OCI-LY7 (cell line): ENCODE measurements at regions of chr5 and their contacts with region 1.

Region 1: DNA sequence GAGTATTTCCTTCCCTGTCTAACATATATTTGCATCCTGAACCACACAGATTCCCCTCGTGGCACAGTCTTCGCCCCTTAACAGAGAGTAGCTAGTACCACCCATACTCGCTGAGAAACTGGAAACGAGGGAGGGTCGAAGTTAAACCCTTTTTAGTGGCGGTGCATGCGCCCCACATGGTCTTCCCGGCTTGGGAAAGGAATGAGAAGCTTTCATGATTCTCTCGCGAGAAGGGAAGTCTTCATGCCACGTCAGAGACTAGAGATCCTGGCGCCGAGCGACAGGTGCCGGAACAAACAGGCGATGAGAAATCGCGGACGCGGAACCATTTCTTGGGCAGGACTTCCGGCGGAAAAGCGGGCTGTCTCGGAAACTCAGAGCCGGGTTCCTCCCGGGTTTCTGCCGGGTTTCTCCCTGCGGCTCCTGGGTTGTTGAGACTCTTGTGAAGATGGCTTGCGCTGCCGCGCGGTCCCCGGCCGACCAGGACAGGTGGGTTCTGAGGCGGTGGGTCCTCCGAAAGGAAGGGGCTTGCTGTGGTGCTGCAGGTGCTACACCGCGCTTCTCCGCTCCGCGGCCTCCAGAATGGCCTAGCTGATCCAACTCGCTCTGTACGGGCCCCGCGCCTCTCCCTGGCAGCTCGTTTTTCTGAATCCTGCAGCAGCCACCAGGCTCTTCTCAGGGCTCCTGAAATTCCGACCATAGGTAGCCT is at the start of gene SRP19:
- DNase-seq: peak; percentile 97
- H3K4me3 ChIP-seq: peak within 1 kb of the TSS; percentile 76
- H3K27ac ChIP-seq: peak within 1 kb of the TSS; percentile 36
- H3K4me1 ChIP-seq: peaks cover 30% of the 10 kb centered on the region
- CTCF ChIP-seq: no peak
- total RNA-seq, gene SRP19: 32.9 and 48.1 TPM in 2 replicates

Region 2: GRCh38 chr5:112848116-112848811 is 12.8 kb before region 1 on chr5:
- CTCF ChIA-PET with region 1: no interaction called
- POLR2A ChIA-PET with region 1: interaction called, 13 read pairs
- intact Hi-C with region 1: no loop called
- DNase-seq: peak; percentile 79
- H3K4me3 ChIP-seq: no peak overlapping the region
- H3K27ac ChIP-seq: no peak overlapping the region
- H3K4me1 ChIP-seq: no peaks in the 10 kb centered on the region
- CTCF ChIP-seq: peak; percentile 83

Region 3: GRCh38 chr5:112907166-112907631 is 46.1 kb after region 1 on chr5:
- CTCF ChIA-PET with region 1: no interaction called
- POLR2A ChIA-PET with region 1: interaction called, 7 read pairs
- intact Hi-C with region 1: loop called (anchors 5 kb)
- DNase-seq: no peak
- H3K4me3 ChIP-seq: no peak overlapping the region
- H3K27ac ChIP-seq: no peak overlapping the region
- H3K4me1 ChIP-seq: no peaks in the 10 kb centered on the region
- CTCF ChIP-seq: no peak

Region 4: DNA sequence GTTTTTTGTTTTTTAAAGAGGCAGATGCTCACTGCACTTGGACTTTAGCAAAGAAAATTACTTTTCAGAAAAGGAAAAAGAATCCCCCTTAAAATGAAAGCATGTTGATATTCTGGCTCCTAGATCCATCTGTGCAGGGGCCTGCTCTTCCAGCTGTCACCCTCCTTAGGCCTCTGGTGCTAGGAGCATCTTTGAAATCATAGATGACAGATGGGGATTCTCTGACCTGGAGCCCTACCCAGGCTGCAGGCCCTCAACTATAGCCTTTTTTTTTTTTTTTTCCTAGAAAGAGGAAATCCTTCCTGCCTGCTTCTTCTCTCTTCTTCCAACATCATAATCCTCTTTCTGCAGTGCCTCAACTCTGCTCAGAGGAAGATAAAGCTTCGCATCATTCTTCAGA is 99.2 kb after region 1 on chr5:
- CTCF ChIA-PET with region 1: no interaction called
- POLR2A ChIA-PET with region 1: no interaction called
- intact Hi-C with region 1: loop called (anchors 5 kb)
- DNase-seq: no peak
- H3K4me3 ChIP-seq: no peak overlapping the region
- H3K27ac ChIP-seq: no peak overlapping the region
- H3K4me1 ChIP-seq: peaks cover 14% of the 10 kb centered on the region
- CTCF ChIP-seq: no peak

Region 5: DNA sequence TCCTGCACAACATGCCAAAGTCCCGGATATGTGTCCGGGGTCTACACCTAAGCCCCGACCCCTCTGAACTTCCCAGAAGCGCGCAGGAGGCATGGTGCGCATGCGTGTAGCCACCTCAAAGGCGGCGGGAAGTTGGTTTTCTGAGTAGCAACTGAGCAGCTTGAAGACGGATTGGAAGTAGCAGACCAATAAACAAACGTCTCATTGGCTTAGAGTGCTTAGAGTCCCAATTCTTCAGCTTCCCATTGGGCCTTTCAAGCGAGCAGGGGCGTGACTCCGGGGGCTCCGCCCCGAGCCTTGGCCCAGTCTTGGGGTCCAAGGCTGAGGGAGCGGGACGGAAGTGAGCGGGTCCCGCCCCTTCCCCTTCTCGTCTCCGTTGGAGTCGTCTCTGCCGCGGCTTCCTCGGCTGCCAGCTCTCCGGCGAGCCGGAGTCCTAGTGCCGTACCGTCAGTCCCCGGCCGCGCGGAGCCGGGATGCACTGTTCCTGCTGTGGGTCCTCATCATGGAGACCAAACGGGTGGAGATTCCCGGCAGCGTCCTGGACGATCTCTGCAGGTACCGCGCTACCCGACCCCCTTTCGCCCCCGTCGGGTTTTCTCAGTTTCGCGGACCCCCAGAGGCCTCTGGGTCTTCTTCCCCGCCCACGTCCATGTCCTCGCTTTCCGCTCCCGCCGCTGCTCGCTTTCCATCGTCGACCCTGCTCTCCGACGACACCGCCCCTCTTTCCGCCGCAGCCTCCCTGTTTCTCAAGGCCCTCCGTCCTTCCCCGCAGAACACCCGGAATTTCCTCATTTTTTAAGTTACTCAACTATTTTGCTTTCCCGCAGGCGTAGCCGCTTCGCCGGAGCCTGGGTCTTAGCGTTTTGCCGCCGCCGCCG is 115.6 kb after region 1 on chr5 and contains the start of gene DCP2:
- CTCF ChIA-PET with region 1: interaction called, 3 read pairs
- POLR2A ChIA-PET with region 1: interaction called, 9 read pairs
- intact Hi-C with region 1: loop called (anchors 2 kb)
- DNase-seq: peak; percentile 100
- H3K4me3 ChIP-seq: peak within 1 kb of the TSS; percentile 92
- H3K27ac ChIP-seq: peak within 1 kb of the TSS; percentile 73
- H3K4me1 ChIP-seq: peaks cover 36% of the 10 kb centered on the region
- CTCF ChIP-seq: no peak
- total RNA-seq, gene DCP2: 69.3 and 81.3 TPM in 2 replicates

Region 6: GRCh38 chr5:113005454-113005853 is 144.4 kb after region 1 on chr5:
- CTCF ChIA-PET with region 1: no interaction called
- POLR2A ChIA-PET with region 1: no interaction called
- intact Hi-C with region 1: no loop called
- DNase-seq: no peak
- H3K4me3 ChIP-seq: no peak overlapping the region
- H3K27ac ChIP-seq: no peak overlapping the region
- H3K4me1 ChIP-seq: no peaks in the 10 kb centered on the region
- CTCF ChIP-seq: no peak

Region 7: DNA sequence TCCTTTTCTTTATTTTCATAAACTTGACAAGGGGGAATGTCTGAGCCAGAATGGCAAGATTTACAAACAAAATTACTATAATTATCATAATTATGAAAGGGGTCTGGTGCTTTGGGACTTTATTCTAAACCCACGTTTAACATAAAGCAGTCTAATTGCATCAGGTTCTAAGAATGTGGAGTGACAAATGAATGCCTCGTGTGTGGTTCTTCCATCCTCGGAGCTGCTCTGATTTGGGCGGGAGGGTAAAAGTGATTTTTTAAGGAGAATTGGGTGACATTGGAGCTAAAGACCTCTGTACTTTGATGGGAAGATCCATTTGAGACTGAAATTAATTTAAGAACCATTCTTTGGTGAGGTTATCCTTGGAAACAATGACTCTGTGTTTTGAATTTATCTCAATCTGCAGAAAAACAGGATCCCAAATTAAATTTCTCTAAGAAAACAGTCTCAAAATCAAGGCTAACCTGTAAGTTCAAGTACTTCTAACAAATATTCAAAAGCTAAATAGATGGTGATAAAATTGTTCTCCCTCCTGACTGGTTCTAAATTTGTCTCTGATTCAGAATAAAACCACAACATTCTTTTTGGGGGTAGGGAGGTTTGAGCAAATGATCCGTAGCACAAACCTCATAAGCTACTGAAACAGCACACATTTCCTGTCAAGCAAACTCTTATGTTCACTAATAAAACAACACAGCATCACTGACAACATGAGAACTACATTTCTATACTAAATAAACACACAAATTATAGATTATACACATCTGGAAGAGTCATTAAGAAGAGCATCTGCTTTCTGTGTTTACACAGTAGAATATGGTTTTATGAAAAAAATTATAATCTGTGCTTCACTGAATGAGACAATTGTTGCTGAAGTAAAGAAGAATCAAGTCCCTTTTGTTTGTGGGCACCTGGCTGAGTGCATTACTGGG is 201.0 kb after region 1 on chr5:
- CTCF ChIA-PET with region 1: no interaction called
- POLR2A ChIA-PET with region 1: no interaction called
- intact Hi-C with region 1: no loop called
- DNase-seq: no peak
- H3K4me3 ChIP-seq: no peak overlapping the region
- H3K27ac ChIP-seq: no peak overlapping the region
- H3K4me1 ChIP-seq: peaks cover 8% of the 10 kb centered on the region
- CTCF ChIP-seq: no peak

Region 8: GRCh38 chr5:113246361-113246870 is 385.3 kb after region 1 on chr5:
- CTCF ChIA-PET with region 1: no interaction called
- POLR2A ChIA-PET with region 1: no interaction called
- intact Hi-C with region 1: no loop called
- DNase-seq: no peak
- H3K4me3 ChIP-seq: no peak overlapping the region
- H3K27ac ChIP-seq: no peak overlapping the region
- H3K4me1 ChIP-seq: no peaks in the 10 kb centered on the region
- CTCF ChIP-seq: no peak